ENCODE measurements at regions of chr16 and their contacts with region 1.

Region 1: GRCh38 chr16:12017558-12017957 is 41.0 kb downstream of the SNX29 start:
- DNase-seq: peak; percentile 80
- ATAC-seq: peak; percentile 94
- H3K4me3 ChIP-seq: no peak overlapping the region
- H3K27ac ChIP-seq: peak overlapping the region; percentile 72; the same call in 1 of the 2 replicates
- H3K4me1 ChIP-seq: peaks cover 10% of the 10 kb centered on the region
- H3K27me3 ChIP-seq: no peaks in the 10 kb centered on the region
- CTCF ChIP-seq: no peak
- POLR2A ChIP-seq: no peak
- RAD21 ChIP-seq: no peak

Region 2: DNA sequence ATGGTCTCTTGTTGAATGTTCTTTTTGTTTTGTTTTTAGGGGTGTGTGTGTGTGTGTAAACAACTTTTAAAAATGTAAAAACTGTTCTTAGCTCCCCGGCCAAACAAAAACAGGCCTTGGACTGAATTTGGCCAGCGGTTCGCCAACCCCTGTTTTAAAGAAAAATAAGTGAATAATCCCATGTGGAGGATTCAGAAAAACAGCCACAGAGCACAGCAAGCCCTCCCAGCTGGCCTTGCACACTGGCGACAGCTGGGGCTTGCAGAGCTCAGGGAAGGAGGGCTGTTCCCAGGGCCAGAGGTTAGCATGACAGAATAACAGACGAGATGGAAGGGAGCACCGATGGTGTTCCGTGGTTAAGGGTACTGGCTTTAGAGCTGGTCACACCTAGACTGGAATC is 1476.2 kb before region 1 on chr16:
- CTCF ChIA-PET with region 1: no interaction called
- POLR2A ChIA-PET with region 1: no interaction called
- dilution Hi-C with region 1: no loop called
- in situ Hi-C with region 1: no loop called
- intact Hi-C with region 1: no loop called
- DNase-seq: no peak
- ATAC-seq: no peak
- H3K4me3 ChIP-seq: no peak overlapping the region
- H3K27ac ChIP-seq: no peak overlapping the region
- H3K4me1 ChIP-seq: no peaks in the 10 kb centered on the region
- H3K27me3 ChIP-seq: no peaks in the 10 kb centered on the region
- CTCF ChIP-seq: no peak
- POLR2A ChIP-seq: no peak
- RAD21 ChIP-seq: no peak

Region 3: DNA sequence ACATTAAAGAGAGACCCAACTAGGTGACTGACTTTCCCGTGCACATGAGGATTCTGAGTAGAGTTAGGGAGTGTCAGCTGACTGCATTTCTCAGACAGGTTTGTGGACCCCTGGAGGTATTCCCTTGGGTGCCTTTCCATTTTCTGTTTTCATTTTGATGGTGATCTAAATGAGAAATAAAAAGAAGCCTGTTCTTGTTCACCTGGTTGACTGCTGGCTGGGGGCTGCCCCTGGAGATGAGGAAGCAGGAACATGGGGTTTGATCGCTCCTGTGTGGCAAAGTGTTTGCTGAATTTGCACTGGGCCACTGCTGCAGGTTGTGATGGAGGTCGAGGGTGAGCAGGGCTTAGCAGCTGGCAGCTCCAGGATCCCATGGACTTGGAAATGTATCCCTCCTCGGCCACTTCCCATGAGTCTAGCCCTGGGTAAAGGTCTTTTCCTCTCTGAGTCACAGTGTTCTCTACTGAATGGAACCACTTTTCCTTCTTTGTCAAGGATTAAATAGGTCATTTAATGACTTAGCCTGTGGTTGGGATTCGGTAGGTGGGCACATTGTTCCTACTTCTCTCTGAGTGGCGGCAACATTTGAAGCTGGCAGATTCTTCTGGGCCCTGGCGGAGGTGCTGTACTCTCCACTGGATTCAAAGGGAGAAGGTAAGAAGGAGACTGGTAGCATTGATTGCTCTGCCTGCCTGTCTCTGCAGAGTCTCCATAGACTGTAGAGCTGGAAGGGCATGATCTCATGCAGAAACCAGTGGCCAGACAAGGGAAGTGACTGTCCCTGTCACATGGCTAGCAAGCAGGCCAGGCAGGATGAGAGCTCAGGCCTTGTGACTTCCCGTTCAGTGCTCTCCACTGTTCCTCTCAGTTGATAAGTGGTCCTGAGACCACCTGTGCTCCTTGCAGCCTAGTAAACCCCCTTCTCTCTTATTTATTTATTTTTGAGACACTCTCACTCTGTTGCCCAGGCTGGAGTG is 23.1 kb before region 1 on chr16:
- CTCF ChIA-PET with region 1: no interaction called
- POLR2A ChIA-PET with region 1: no interaction called
- dilution Hi-C with region 1: no loop called
- in situ Hi-C with region 1: no loop called
- intact Hi-C with region 1: no loop called
- DNase-seq: peak; percentile 28
- ATAC-seq: peak; percentile 29; the same call in 1 of the 2 replicates
- H3K4me3 ChIP-seq: no peak overlapping the region
- H3K27ac ChIP-seq: no peak overlapping the region
- H3K4me1 ChIP-seq: peaks cover 2% of the 10 kb centered on the region; the same call in 1 of the 2 replicates
- H3K27me3 ChIP-seq: no peaks in the 10 kb centered on the region
- CTCF ChIP-seq: no peak
- POLR2A ChIP-seq: no peak
- RAD21 ChIP-seq: no peak

Region 4: DNA sequence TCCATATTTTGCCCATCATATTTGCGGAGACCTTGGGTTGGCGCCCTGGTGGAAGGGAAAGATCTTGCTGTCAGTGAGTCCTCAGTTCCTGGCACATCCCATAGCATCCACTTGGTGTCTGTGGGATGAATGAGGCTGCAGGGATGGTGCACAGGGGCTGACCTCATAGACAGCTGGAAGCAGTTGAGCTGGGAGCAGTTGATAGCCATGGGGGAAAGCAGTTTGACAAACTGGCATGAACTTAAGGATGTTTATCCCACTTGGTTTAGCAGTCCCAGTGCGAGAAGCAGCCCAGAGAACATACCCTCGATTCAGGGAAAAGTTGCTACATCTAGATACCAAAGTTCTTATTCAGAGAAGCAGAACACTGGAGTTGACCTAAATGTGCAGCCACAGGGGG is 39.7 kb after region 1 on chr16:
- CTCF ChIA-PET with region 1: no interaction called
- POLR2A ChIA-PET with region 1: no interaction called
- dilution Hi-C with region 1: no loop called
- in situ Hi-C with region 1: no loop called
- intact Hi-C with region 1: loop called (anchors 5 kb)
- DNase-seq: peak; percentile 70
- ATAC-seq: peak; percentile 85
- H3K4me3 ChIP-seq: no peak overlapping the region
- H3K27ac ChIP-seq: no peak overlapping the region; the same call in 1 of the 2 replicates
- H3K4me1 ChIP-seq: peaks cover 10% of the 10 kb centered on the region
- H3K27me3 ChIP-seq: no peaks in the 10 kb centered on the region
- CTCF ChIP-seq: no peak
- POLR2A ChIP-seq: no peak
- RAD21 ChIP-seq: no peak

Measured in IMR-90 (cell line).